Activated naive CD4-positive, alpha-beta T cell treated with anti-CD3 and anti-CD28 coated beads for 36 hours (primary cell): ENCODE measurements at regions of chr19 and their contacts with region 1.

Region 1: GRCh38 chr19:45613926-45614725 is 12.1 kb upstream of the GPR4 start:
- DNase-seq: peak; percentile 75
- H3K4me3 Mint-ChIP-seq: no peak overlapping the region
- H3K27ac Mint-ChIP-seq: peak overlapping the region; percentile 91
- H3K4me1 Mint-ChIP-seq: peaks cover 23% of the 10 kb centered on the region
- H3K27me3 Mint-ChIP-seq: no peaks in the 10 kb centered on the region

Region 2: GRCh38 chr19:45506246-45506990 is 107.7 kb before region 1 on chr19:
- CTCF ChIA-PET with region 1: no interaction called
- intact Hi-C with region 1: no loop called
- DNase-seq: peak; percentile 99
- H3K4me3 Mint-ChIP-seq: peak overlapping the region; percentile 86
- H3K27ac Mint-ChIP-seq: peak overlapping the region; percentile 94
- H3K4me1 Mint-ChIP-seq: peaks cover 39% of the 10 kb centered on the region
- H3K27me3 Mint-ChIP-seq: no peaks in the 10 kb centered on the region

Region 3: GRCh38 chr19:45632468-45633196 is 18.5 kb after region 1 on chr19:
- CTCF ChIA-PET with region 1: no interaction called
- intact Hi-C with region 1: loop called (anchors 1 kb)
- DNase-seq: peak; percentile 69
- H3K4me3 Mint-ChIP-seq: peak overlapping the region; percentile 21
- H3K27ac Mint-ChIP-seq: peak overlapping the region; percentile 87
- H3K4me1 Mint-ChIP-seq: peaks cover 20% of the 10 kb centered on the region
- H3K27me3 Mint-ChIP-seq: no peaks in the 10 kb centered on the region

Region 4: DNA sequence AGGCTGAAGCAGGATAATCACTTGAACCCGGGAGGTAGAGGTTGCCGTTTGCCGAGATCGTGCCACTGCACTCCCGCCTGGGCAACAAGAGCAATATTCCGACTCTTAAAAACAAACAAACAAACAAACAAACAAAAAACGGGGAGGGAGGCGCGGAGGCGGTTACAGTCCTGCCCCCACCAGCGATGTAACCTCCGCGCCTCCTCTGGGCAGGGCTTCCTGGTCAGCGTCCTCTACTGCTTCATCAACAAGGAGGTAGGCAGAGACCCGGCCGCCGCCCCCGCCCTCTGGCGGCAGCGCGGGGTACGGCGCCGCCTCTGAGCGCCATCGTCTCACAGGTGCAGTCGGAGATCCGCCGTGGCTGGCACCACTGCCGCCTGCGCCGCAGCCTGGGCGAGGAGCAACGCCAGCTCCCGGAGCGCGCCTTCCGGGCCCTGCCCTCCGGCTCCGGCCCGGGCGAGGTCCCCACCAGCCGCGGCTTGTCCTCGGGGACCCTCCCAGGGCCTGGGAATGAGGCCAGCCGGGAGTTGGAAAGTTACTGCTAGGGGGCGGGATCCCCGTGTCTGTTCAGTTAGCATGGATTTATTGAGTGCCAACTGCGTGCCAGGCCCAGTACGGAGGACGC is 67.4 kb after region 1 on chr19:
- CTCF ChIA-PET with region 1: no interaction called
- intact Hi-C with region 1: no loop called
- DNase-seq: peak; percentile 90
- H3K4me3 Mint-ChIP-seq: peak overlapping the region; percentile 71
- H3K27ac Mint-ChIP-seq: no peak overlapping the region
- H3K4me1 Mint-ChIP-seq: peaks cover 20% of the 10 kb centered on the region
- H3K27me3 Mint-ChIP-seq: no peaks in the 10 kb centered on the region

Region 5: GRCh38 chr19:45770192-45771101 is 156.3 kb after region 1 on chr19:
- CTCF ChIA-PET with region 1: no interaction called
- intact Hi-C with region 1: no loop called
- DNase-seq: peak; percentile 89
- H3K4me3 Mint-ChIP-seq: peak overlapping the region; percentile 81
- H3K27ac Mint-ChIP-seq: no peak overlapping the region
- H3K4me1 Mint-ChIP-seq: peaks cover 10% of the 10 kb centered on the region
- H3K27me3 Mint-ChIP-seq: peaks cover 16% of the 10 kb centered on the region

Region 6: DNA sequence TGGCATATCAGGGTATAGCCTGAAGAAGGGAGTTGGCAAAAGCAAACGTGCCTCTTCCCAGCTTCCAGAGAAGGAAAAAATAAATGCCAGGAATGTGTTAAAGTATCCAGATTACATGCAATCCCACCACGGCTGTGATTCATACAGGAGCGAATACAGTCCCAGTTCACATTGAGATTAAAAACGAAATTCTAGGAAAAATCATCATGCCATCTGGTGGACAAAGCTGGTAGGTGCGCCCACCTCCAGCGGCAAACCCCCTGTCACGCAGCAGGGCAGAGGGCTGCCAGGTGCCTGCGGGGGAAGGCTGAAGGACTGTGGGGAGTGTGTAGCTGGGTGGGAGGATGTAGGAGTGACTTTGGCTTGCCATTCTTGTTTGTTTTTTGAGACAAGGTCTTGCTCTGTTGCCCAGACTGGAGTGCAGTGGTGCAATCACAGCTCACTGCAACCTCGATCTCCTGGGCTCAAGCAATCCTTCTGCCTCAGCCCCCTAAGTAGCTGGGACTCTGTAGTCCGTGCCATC is 184.9 kb after region 1 on chr19:
- CTCF ChIA-PET with region 1: no interaction called
- intact Hi-C with region 1: no loop called
- DNase-seq: peak; percentile 69
- H3K4me3 Mint-ChIP-seq: no peak overlapping the region
- H3K27ac Mint-ChIP-seq: no peak overlapping the region
- H3K4me1 Mint-ChIP-seq: peaks cover 4% of the 10 kb centered on the region
- H3K27me3 Mint-ChIP-seq: peaks cover 30% of the 10 kb centered on the region